ENCODE measurements at regions of chr7 and their contacts with region 1.

Region 1: DNA sequence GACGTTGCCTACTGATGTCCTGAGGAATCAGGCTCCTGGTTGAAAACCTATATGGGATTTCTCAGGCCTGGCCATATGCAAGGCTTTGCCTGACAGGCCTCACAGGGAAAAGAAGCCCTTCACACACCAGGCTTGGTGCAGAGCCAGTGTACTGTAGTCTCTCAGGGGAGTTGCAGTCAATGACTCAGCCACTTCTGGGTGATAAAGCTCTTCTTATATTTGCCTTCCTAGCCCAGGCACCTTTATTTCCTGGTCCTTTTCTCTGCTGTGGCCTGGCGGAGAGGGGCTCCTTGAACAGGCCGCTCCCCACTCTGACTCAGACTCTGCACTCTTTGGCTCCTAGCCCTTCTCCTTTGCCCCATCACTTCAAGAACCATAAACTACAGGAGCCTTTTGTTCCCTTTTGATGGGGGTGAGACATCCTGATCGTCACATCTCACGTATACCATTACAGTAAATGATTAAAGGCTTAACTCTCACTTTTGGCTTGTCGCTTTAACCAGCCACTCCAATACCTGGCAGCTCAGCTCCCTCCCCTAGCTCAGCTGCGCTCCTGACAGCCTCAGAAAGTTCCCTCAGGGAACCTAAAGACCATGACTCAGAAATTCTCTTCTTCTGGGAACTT is 33.5 kb downstream of the DPY19L1 start:
- DNase-seq: peak; percentile 94
- ATAC-seq: peak; percentile 89
- H3K4me3 ChIP-seq: no peak overlapping the region
- H3K27ac ChIP-seq: peak overlapping the region; percentile 98
- H3K4me1 ChIP-seq: peaks cover 23% of the 10 kb centered on the region
- H3K27me3 ChIP-seq: no peaks in the 10 kb centered on the region
- CTCF ChIP-seq: no peak

Region 2: GRCh38 chr7:34776739-34777358 is 226.9 kb before region 1 on chr7:
- CTCF ChIA-PET with region 1: no interaction called
- POLR2A ChIA-PET with region 1: no interaction called
- intact Hi-C with region 1: no loop called
- DNase-seq: no peak
- ATAC-seq: no peak
- H3K4me3 ChIP-seq: no peak overlapping the region
- H3K27ac ChIP-seq: no peak overlapping the region
- H3K4me1 ChIP-seq: no peaks in the 10 kb centered on the region
- H3K27me3 ChIP-seq: no peaks in the 10 kb centered on the region; the same call in 1 of the 2 replicates
- CTCF ChIP-seq: no peak

Region 3: GRCh38 chr7:34823640-34824258 is 180.0 kb before region 1 on chr7:
- CTCF ChIA-PET with region 1: no interaction called
- POLR2A ChIA-PET with region 1: no interaction called
- intact Hi-C with region 1: loop called (anchors 10 kb)
- DNase-seq: peak; percentile 67
- ATAC-seq: peak; percentile 72
- H3K4me3 ChIP-seq: no peak overlapping the region
- H3K27ac ChIP-seq: no peak overlapping the region
- H3K4me1 ChIP-seq: no peaks in the 10 kb centered on the region; the same call in 1 of the 2 replicates
- H3K27me3 ChIP-seq: no peaks in the 10 kb centered on the region
- CTCF ChIP-seq: peak; percentile 79

Region 4: DNA sequence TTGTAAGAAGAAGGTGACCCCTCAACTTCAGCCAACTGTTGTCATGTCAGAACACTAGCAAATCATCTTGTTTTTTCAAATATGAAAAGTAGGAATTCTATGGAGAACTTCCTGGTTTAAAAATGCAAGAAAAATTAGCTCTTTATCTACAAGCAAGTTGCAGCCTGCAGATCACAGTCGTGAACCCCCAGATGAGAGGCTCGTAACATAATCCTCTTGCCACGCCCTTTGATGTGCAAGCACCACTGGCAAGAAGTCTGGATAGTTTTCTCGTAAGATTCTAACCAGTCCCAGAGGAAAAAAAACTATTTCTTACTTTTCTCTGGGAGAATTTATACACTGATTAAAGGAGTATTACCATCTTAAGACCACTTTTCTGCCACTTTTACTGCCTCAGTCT is 98.8 kb before region 1 on chr7:
- CTCF ChIA-PET with region 1: no interaction called
- POLR2A ChIA-PET with region 1: no interaction called
- intact Hi-C with region 1: no loop called
- DNase-seq: no peak
- ATAC-seq: no peak
- H3K4me3 ChIP-seq: no peak overlapping the region
- H3K27ac ChIP-seq: no peak overlapping the region
- H3K4me1 ChIP-seq: no peaks in the 10 kb centered on the region
- H3K27me3 ChIP-seq: no peaks in the 10 kb centered on the region
- CTCF ChIP-seq: no peak

Region 5: DNA sequence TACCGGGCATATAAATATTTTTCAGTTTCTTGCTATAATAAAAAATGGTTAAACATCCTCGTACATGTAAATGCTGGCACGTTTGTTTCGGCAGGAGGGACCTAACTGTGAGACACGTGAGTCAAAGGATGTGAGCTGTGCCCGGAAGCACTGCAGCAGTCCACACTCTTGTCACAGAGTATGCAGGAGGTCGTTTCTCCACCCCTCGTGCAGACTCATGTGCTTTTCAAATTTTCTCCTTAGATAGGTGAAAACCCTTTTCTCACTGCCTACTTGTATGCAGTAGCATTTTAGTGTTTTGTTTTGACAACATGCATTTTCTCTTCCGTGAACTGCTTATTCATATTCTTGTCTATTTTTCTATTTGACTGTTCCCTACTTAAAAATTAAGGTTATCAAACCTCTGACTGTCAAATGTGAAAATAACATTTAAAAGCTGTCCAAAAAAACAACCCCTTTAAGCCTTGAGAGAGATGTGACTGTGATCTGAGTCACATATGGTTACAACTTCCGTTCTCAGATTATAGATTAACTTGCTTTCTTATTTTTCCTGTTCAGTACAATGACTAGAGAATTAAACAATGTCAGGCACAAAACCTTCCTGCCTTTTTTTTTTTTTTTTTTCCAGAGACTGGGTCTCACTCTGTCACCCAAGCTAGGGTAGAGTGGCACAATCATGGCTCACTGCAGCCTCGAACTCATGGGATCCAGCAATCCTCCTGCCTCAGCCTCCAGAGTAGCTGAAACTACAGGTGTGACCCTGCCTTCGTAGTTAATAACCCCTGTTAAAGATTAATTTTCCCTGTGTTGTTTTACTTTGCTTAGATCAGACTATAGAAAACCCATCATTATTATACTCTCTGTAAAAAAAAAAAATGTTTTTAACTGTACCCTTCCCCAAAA is 11.6 kb before region 1 on chr7:
- CTCF ChIA-PET with region 1: no interaction called
- POLR2A ChIA-PET with region 1: no interaction called
- intact Hi-C with region 1: loop called (anchors 1 kb)
- DNase-seq: peak; percentile 75
- ATAC-seq: peak; percentile 94
- H3K4me3 ChIP-seq: peak overlapping the region; percentile 44
- H3K27ac ChIP-seq: peak overlapping the region; percentile 84
- H3K4me1 ChIP-seq: peaks cover 20% of the 10 kb centered on the region
- H3K27me3 ChIP-seq: no peaks in the 10 kb centered on the region
- CTCF ChIP-seq: no peak